ENCODE measurements at regions of chr9 and their contacts with region 1.

Region 1: DNA sequence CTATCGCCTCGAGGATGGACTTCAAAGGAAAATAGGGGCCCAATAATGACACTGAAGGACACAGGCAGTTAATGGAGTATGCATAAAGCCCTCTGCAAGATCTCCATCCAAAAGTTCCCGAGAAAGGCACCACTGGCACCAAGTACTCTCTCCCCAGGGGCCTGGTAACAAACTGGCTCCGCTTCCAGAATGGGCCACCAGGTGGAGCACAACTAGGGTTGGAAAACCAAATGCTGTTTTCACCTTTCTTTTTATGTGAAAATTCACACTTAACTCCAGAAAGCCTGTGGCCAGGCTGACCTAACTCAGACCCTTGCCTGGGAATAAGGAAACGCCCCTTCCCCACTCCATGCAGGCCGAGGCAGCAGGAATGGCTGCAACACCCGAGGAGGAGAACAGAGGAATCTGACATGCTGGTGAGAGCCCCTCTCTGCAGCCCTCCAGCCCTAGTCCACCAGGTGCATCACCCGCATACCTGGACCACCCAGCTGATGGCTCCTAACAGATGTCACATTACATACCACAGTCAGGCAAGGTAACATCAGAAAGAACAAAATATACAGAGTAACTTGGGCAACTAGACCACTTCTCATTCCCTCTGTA is 42.8 kb downstream of the CAMSAP1 start:
- DNase-seq: peak; percentile 43 to 97
- H3K4me3 ChIP-seq: no peak overlapping the region
- H3K27ac ChIP-seq: no peak overlapping the region
- H3K4me1 ChIP-seq: peaks cover 0 to 9% (median 0%) of the 10 kb centered on the region in 4 experiments; a peak in 3 of 7 replicates
- H3K27me3 ChIP-seq: no peaks in the 10 kb centered on the region
- CTCF ChIP-seq: peak; percentile 65 to 82 (median 80)
- EP300 ChIP-seq: no peak
- POLR2A ChIP-seq: no peak
- RAD21 ChIP-seq: peak; percentile 58 to 70

Region 2: GRCh38 chr9:135840539-135840938 is 24.0 kb before region 1 on chr9:
- CTCF ChIA-PET with region 1: interaction called, 10 read pairs
- POLR2A ChIA-PET with region 1: no interaction called
- DNase-seq: no peak
- H3K4me3 ChIP-seq: no peak overlapping the region
- H3K27ac ChIP-seq: peak overlapping the region; percentile 54; the same call in 1 of the 2 replicates
- H3K4me1 ChIP-seq: peaks cover 0 to 16% (median 7%) of the 10 kb centered on the region in 4 experiments; a peak in 3 of 7 replicates
- H3K27me3 ChIP-seq: no peaks in the 10 kb centered on the region; a peak in 1 of 7 replicates
- CTCF ChIP-seq: no peak
- EP300 ChIP-seq: no peak
- POLR2A ChIP-seq: no peak
- RAD21 ChIP-seq: no peak

Region 3: GRCh38 chr9:135848341-135849047 is 16.1 kb before region 1 on chr9:
- CTCF ChIA-PET with region 1: interaction called, 11 read pairs
- POLR2A ChIA-PET with region 1: interaction called, 5 read pairs
- DNase-seq: no peak
- H3K4me3 ChIP-seq: no peak overlapping the region
- H3K27ac ChIP-seq: no peak overlapping the region
- H3K4me1 ChIP-seq: peaks cover 0 to 6% (median 3%) of the 10 kb centered on the region in 4 experiments; a peak in 5 of 7 replicates
- H3K27me3 ChIP-seq: no peaks in the 10 kb centered on the region
- CTCF ChIP-seq: no peak
- EP300 ChIP-seq: no peak
- POLR2A ChIP-seq: no peak
- RAD21 ChIP-seq: no peak

Region 4: DNA sequence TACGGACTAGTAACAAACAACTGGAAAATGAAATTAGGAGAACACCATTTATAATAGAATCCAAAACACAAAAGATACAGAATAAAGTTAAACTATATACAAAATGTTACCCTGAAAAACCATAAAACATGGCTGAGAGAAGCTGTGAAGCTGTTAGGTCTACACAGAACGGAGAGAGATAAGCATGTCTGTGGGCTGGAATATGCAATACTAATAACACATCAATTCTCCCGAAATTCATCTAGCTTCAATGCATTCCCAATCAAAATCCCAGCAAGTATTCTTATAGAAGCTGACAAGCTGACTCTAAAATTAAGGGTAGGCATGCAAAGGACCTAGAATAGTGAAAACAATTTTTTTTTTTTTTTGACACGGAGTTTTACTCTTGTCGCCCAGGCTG is 10.3 kb after region 1 on chr9:
- CTCF ChIA-PET with region 1: interaction called, 23 read pairs
- POLR2A ChIA-PET with region 1: no interaction called
- DNase-seq: no peak
- H3K4me3 ChIP-seq: no peak overlapping the region
- H3K27ac ChIP-seq: no peak overlapping the region
- H3K4me1 ChIP-seq: peaks cover 6 to 20% (median 17%) of the 10 kb centered on the region in 4 experiments
- H3K27me3 ChIP-seq: no peaks in the 10 kb centered on the region
- CTCF ChIP-seq: no peak
- EP300 ChIP-seq: no peak
- POLR2A ChIP-seq: no peak
- RAD21 ChIP-seq: no peak

Region 5: DNA sequence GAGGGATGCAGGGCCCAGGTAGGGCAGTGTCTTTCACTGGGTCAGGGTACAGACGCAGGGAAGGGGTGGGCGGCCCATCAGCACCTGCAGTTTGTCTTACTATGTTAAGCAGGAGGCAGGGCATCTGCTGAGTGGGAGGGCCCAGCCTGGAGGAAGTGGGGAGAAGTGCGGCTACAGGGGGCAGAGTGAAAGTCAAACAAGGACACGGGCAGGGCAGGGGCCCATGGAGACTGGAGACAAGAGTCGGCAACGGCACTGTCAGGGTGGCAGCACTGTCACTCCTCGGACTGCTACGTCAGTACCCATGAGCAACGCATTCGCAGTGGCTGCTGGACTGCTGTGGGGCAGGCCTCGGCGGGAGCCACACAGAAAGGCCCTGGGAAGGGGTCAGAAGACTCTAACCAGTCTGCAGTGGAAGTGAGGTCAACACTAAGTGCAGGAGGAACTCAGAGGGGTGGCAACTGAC is 23.1 kb after region 1 on chr9:
- CTCF ChIA-PET with region 1: interaction called, 15 read pairs
- POLR2A ChIA-PET with region 1: no interaction called
- DNase-seq: peak in 1 of 2 experiments; percentile 69
- H3K4me3 ChIP-seq: no peak overlapping the region
- H3K27ac ChIP-seq: peak overlapping the region; percentile 33; the same call in 1 of the 2 replicates
- H3K4me1 ChIP-seq: peaks cover 3 to 51% (median 32%) of the 10 kb centered on the region in 4 experiments
- H3K27me3 ChIP-seq: no peaks in the 10 kb centered on the region
- CTCF ChIP-seq: peak in 1 of 3 experiments; percentile 31; a peak in 1 of 4 replicates
- EP300 ChIP-seq: no peak
- POLR2A ChIP-seq: no peak
- RAD21 ChIP-seq: no peak

Measured in H1 (cell line).